Endothelial cell of umbilical vein (primary cell): ENCODE measurements at regions of chr15 and their contacts with region 1.

Region 1: DNA sequence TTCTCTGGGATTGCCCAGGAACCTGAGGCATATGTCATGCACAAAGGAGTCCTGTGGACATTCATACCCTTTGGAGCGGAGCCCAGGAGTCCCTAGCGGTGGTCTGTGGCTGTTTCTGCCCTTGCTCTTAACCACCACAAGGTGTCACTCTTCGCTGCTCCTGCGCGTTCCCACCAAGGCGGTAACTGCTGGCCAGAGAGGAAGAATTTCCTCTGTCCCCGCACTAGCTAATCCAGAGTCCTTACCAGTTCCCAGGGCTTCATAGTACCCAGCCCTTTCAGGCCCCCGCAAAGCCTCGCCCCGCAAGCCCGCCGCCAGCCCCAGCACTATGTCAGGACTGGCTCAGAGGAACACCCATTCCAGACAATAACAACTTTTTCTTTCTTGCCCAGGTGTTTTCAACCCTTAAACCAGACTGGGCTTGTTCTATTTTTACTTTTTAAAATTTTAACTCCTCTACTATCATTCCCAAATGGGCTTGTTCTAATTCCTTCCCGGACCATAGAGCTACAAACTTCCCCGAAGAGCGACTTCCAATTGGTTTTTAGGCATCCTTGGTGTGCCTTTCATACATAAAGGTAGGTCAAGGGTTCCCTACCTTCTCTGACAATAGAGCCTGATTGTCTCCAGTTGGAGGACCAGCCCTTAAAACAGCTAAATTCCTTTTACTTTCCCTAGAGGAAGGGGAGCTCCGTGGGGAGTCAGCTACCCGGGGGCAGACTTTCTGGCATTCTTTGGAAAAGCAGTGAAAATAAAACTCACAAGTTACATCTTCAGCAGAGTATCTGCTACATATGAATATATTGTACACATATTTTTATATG is 31.8 kb upstream of the ZNF774 start:
- DNase-seq: peak; percentile 91
- H3K4me3 ChIP-seq: no peak overlapping the region
- H3K27ac ChIP-seq: no peak overlapping the region
- H3K4me1 ChIP-seq: peaks cover 3% of the 10 kb centered on the region
- H3K27me3 ChIP-seq: no peaks in the 10 kb centered on the region
- CTCF ChIP-seq: peak; percentile 97 to 98
- POLR2A ChIP-seq: no peak

Region 2: GRCh38 chr15:90300988-90301706 is 19.1 kb before region 1 on chr15:
- CTCF ChIA-PET with region 1: interaction called, 13 read pairs
- POLR2A ChIA-PET with region 1: no interaction called
- dilution Hi-C with region 1: no loop called
- intact Hi-C with region 1: no loop called
- DNase-seq: peak; percentile 32
- H3K4me3 ChIP-seq: no peak overlapping the region
- H3K27ac ChIP-seq: no peak overlapping the region
- H3K4me1 ChIP-seq: no peaks in the 10 kb centered on the region
- H3K27me3 ChIP-seq: no peaks in the 10 kb centered on the region
- CTCF ChIP-seq: peak; percentile 84 to 91
- POLR2A ChIP-seq: no peak

Region 3: DNA sequence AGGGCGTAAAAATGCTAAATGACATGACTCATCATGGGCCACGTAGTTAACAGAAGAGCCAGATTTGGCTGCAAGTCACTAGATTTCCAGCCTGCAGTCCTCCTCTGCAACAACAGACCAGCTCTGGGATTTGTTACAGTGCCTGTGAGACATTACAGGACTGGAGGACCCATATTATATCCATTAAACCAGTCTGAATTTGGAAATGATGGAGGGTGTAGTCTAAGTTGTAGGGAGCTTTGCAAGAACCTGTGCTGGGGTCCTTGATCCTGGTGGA is 42.6 kb after region 1 on chr15:
- CTCF ChIA-PET with region 1: interaction called, 41 read pairs
- POLR2A ChIA-PET with region 1: no interaction called
- dilution Hi-C with region 1: no loop called
- intact Hi-C with region 1: loop called (anchors 1 kb)
- DNase-seq: peak; percentile 53
- H3K4me3 ChIP-seq: no peak overlapping the region
- H3K27ac ChIP-seq: peak overlapping the region; percentile 86
- H3K4me1 ChIP-seq: peaks cover 31% of the 10 kb centered on the region
- H3K27me3 ChIP-seq: no peaks in the 10 kb centered on the region
- CTCF ChIP-seq: no peak
- POLR2A ChIP-seq: no peak

Region 4: GRCh38 chr15:90436952-90437351 is 116.7 kb after region 1 on chr15:
- CTCF ChIA-PET with region 1: interaction called, 21 read pairs
- POLR2A ChIA-PET with region 1: no interaction called
- dilution Hi-C with region 1: no loop called
- intact Hi-C with region 1: loop called (anchors 2 kb)
- DNase-seq: no peak
- H3K4me3 ChIP-seq: no peak overlapping the region
- H3K27ac ChIP-seq: no peak overlapping the region
- H3K4me1 ChIP-seq: peaks cover 50% of the 10 kb centered on the region
- H3K27me3 ChIP-seq: no peaks in the 10 kb centered on the region
- CTCF ChIP-seq: no peak
- POLR2A ChIP-seq: no peak

Region 5: GRCh38 chr15:90463381-90463780 is 143.1 kb after region 1 on chr15:
- CTCF ChIA-PET with region 1: interaction called, 45 read pairs
- POLR2A ChIA-PET with region 1: no interaction called
- dilution Hi-C with region 1: no loop called
- intact Hi-C with region 1: loop called (anchors 1 kb)
- DNase-seq: peak; percentile 93
- H3K4me3 ChIP-seq: no peak overlapping the region
- H3K27ac ChIP-seq: peak overlapping the region; percentile 70
- H3K4me1 ChIP-seq: peaks cover 58% of the 10 kb centered on the region
- H3K27me3 ChIP-seq: no peaks in the 10 kb centered on the region
- CTCF ChIP-seq: no peak
- POLR2A ChIP-seq: no peak

Region 6: GRCh38 chr15:90497912-90498311 is 177.6 kb after region 1 on chr15:
- CTCF ChIA-PET with region 1: interaction called, 10 read pairs
- POLR2A ChIA-PET with region 1: no interaction called
- dilution Hi-C with region 1: no loop called
- intact Hi-C with region 1: no loop called
- DNase-seq: no peak
- H3K4me3 ChIP-seq: no peak overlapping the region
- H3K27ac ChIP-seq: no peak overlapping the region
- H3K4me1 ChIP-seq: no peaks in the 10 kb centered on the region
- H3K27me3 ChIP-seq: no peaks in the 10 kb centered on the region
- CTCF ChIP-seq: no peak
- POLR2A ChIP-seq: no peak

Region 7: DNA sequence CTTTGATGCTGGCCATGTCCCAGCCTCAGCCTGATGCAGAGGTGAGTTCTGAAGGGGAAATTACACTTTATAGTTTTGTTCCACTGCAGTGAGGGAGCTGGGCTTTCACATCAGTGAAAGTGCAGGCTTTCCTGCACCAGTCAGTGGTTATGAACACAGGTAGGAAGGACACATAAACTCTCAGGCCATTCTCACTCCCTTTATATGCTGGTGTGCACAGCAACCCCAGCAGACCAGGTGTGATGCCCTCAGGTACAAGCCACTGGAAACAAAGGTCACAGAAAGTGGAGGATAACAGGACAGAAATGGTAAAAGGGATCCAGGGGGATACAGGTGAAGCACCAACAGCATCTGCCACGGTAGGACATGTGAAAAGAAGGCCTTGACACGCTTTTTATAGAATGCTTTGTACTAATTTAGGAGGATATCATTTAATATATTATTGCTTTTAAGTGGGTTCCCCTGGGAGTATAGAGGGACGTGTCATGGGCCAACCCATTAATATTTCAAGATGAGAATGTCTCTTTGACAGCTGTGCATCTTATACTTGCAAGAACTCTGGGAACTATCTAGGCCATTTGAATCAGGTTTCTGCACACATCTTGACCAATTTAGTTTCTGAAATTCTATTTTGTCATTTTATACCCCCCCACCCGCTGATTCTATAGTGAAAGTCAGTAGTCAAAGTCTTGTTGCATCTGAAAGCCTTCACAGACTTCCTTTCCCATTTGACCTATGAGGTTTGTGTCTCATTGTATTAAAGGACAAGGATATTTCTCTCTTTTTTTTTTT is 371.9 kb after region 1 on chr15:
- CTCF ChIA-PET with region 1: no interaction called
- POLR2A ChIA-PET with region 1: no interaction called
- dilution Hi-C with region 1: no loop called
- intact Hi-C with region 1: loop called (anchors 2 kb)
- DNase-seq: no peak
- H3K4me3 ChIP-seq: no peak overlapping the region
- H3K27ac ChIP-seq: no peak overlapping the region
- H3K4me1 ChIP-seq: peaks cover 2% of the 10 kb centered on the region
- H3K27me3 ChIP-seq: no peaks in the 10 kb centered on the region
- CTCF ChIP-seq: no peak
- POLR2A ChIP-seq: no peak